ENCODE measurements at regions of chr11 and their contacts with region 1.

Region 1: DNA sequence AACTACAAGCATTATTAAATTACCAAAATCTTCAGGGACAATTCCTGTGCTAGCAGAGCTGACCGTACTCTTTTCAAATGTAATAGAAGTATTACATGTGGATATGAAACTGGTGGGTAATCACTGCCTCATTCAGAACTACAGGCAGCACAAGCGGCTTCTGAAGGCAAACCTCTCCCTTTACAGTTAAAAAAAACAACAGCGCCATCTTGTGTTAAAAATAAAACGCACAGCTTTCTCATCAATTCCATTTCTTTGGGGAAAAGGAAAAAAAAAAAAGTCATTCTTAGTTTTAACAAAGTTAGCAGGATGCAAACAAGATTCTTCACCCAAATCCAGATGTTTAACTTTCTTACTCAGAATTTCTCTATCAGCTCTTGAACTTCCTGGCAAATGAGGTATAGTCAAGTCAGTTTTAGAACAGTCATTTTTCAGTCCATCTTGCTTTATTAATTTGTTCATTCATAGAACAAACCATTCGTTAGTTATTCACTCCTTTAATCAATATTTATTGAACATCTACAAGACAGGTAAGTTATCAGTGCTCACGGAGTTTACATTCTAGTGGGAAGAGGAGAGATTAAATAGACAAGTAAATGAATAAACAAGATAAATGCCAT is 331.8 kb upstream of the MPPED2 start:
- DNase-seq: peak; percentile 93
- H3K4me3 ChIP-seq: no peak overlapping the region
- H3K27ac ChIP-seq: no peak overlapping the region
- H3K4me1 ChIP-seq: no peaks in the 10 kb centered on the region
- H3K27me3 ChIP-seq: peaks cover 28% of the 10 kb centered on the region
- CTCF ChIP-seq: peak; percentile 99

Region 2: GRCh38 chr11:29527391-29527936 is 1390.5 kb before region 1 on chr11:
- CTCF ChIA-PET with region 1: no interaction called
- POLR2A ChIA-PET with region 1: no interaction called
- intact Hi-C with region 1: loop called (anchors 10 kb)
- DNase-seq: peak; percentile 62
- H3K4me3 ChIP-seq: no peak overlapping the region
- H3K27ac ChIP-seq: no peak overlapping the region
- H3K4me1 ChIP-seq: no peaks in the 10 kb centered on the region
- H3K27me3 ChIP-seq: no peaks in the 10 kb centered on the region
- CTCF ChIP-seq: peak; percentile 57

Region 3: GRCh38 chr11:30128269-30128932 is 789.6 kb before region 1 on chr11:
- CTCF ChIA-PET with region 1: interaction called, 7 read pairs
- POLR2A ChIA-PET with region 1: no interaction called
- intact Hi-C with region 1: loop called (anchors 2 kb)
- DNase-seq: peak; percentile 78
- H3K4me3 ChIP-seq: no peak overlapping the region
- H3K27ac ChIP-seq: no peak overlapping the region
- H3K4me1 ChIP-seq: no peaks in the 10 kb centered on the region
- H3K27me3 ChIP-seq: no peaks in the 10 kb centered on the region
- CTCF ChIP-seq: peak; percentile 99

Region 4: GRCh38 chr11:30346068-30346688 is 571.8 kb before region 1 on chr11:
- CTCF ChIA-PET with region 1: interaction called, 8 read pairs
- POLR2A ChIA-PET with region 1: no interaction called
- intact Hi-C with region 1: loop called (anchors 1 kb)
- DNase-seq: peak; percentile 93
- H3K4me3 ChIP-seq: no peak overlapping the region
- H3K27ac ChIP-seq: no peak overlapping the region
- H3K4me1 ChIP-seq: no peaks in the 10 kb centered on the region
- H3K27me3 ChIP-seq: no peaks in the 10 kb centered on the region
- CTCF ChIP-seq: peak; percentile 99

Region 5: GRCh38 chr11:30586251-30587144 is 331.5 kb before region 1 on chr11 and contains the start of gene MPPED2:
- CTCF ChIA-PET with region 1: no interaction called
- POLR2A ChIA-PET with region 1: no interaction called
- intact Hi-C with region 1: loop called (anchors 5 kb)
- DNase-seq: peak; percentile 58
- H3K4me3 ChIP-seq: peak within 1 kb of the TSS; percentile 50
- H3K27ac ChIP-seq: no peak within 1 kb of the TSS
- H3K4me1 ChIP-seq: peaks cover 19% of the 10 kb centered on the region
- H3K27me3 ChIP-seq: peaks cover 88% of the 10 kb centered on the region
- CTCF ChIP-seq: peak; percentile 39
- total RNA-seq, gene MPPED2: 2.0 and 3.4 TPM in 2 replicates

Region 6: DNA sequence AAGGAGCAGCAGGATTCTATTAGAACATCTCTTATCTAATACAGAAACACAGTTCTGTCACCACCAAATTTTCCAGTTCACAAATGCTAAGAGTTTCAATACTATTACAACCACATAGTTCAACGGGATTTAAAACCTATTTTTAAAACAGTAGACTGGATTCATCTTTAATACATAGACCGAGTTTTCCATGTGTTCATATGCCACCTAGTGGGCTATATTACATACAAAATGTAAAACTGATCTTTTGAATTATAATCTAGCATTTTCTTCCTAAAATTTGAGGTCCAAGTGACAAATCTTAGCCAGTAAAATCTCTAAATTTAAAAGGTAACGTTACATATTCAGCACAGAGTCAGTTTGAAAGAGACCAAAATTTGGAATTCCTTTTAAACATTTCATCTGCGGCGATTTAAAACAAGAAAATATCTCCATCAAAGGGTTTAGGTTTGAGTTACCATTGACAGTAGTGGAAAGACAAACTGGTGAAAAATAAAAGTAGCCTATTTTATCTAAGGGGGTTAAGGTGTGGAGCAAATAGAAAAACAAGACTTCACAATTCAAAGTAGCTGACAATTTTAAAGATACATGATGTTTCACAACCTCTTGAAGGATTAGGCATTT is 62.5 kb before region 1 on chr11:
- CTCF ChIA-PET with region 1: interaction called, 5 read pairs
- POLR2A ChIA-PET with region 1: no interaction called
- intact Hi-C with region 1: loop called (anchors 2 kb)
- DNase-seq: peak; percentile 77
- H3K4me3 ChIP-seq: no peak overlapping the region
- H3K27ac ChIP-seq: no peak overlapping the region
- H3K4me1 ChIP-seq: peaks cover 12% of the 10 kb centered on the region
- H3K27me3 ChIP-seq: no peaks in the 10 kb centered on the region
- CTCF ChIP-seq: peak; percentile 88

Region 7: GRCh38 chr11:30879322-30880005 is 38.5 kb before region 1 on chr11:
- CTCF ChIA-PET with region 1: no interaction called
- POLR2A ChIA-PET with region 1: no interaction called
- intact Hi-C with region 1: no loop called
- DNase-seq: peak; percentile 61
- H3K4me3 ChIP-seq: no peak overlapping the region
- H3K27ac ChIP-seq: no peak overlapping the region
- H3K4me1 ChIP-seq: no peaks in the 10 kb centered on the region
- H3K27me3 ChIP-seq: peaks cover 8% of the 10 kb centered on the region
- CTCF ChIP-seq: no peak

Region 8: GRCh38 chr11:31509429-31510345 is 591.7 kb after region 1 on chr11 and contains the starts of genes ELP4 and IMMP1L:
- CTCF ChIA-PET with region 1: no interaction called
- POLR2A ChIA-PET with region 1: no interaction called
- intact Hi-C with region 1: no loop called
- DNase-seq: peak; percentile 100
- H3K4me3 ChIP-seq: peak within 1 kb of the TSS; percentile 61
- H3K27ac ChIP-seq: peak within 1 kb of the TSS; percentile 82
- H3K4me1 ChIP-seq: peaks cover 24% of the 10 kb centered on the region
- H3K27me3 ChIP-seq: no peaks in the 10 kb centered on the region
- CTCF ChIP-seq: no peak
- total RNA-seq, gene ELP4: 49.4 and 49.7 TPM in 2 replicates
- total RNA-seq, gene IMMP1L: 88.3 and 97.3 TPM in 2 replicates